A549 (cell line): ENCODE measurements at regions of chr6 and their contacts with region 1.

Region 1: DNA sequence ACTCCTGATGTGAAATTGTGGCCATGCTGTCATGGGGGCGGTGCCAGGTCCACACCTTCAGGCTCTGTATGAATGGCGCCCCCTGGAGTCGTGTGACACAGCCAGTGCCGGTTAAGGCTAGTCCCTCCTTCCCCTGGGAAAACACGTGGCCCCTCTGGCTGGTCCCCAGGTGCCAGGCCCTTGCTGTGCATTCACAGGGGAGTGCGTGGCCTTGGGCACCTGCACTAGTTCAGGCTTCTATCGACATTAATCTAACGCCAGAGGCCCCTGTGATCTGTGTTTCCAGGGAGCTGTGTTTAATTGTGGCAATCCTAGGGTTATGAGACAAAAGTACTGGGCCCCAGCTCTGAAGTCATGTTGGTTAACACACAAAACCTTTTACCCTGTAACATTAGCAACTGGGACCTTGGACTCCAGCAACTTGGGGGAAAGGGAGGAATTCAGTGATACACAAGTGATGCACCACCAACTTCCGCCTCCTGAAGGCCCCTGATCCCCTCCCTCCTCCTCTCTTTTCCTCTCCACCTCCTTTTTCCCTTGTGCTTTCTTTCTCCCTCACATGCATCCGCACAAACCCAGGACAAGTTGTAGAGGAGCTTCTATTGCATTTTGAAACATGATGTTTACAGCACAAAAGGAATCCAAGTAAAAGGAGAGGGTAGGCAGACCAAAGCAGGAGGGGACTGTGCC is 74.0 kb downstream of the SSR1 start:
- DNase-seq: peak; percentile 56 to 75
- ATAC-seq: peak; percentile 73 to 88
- H3K4me3 ChIP-seq: no peak overlapping the region
- H3K27ac ChIP-seq: peak overlapping the region in 1 of 2 experiments; percentile 60; a peak in 2 of 6 replicates
- H3K4me1 ChIP-seq: peaks cover 35% of the 10 kb centered on the region
- CTCF ChIP-seq: peak; percentile 55
- EP300 ChIP-seq: no peak
- POLR2A ChIP-seq: no peak
- RAD21 ChIP-seq: peak; percentile 49 to 64

Region 2: GRCh38 chr6:6724539-6725467 is 514.2 kb before region 1 on chr6:
- CTCF ChIA-PET with region 1: interaction called, 43 read pairs
- POLR2A ChIA-PET with region 1: no interaction called
- DNase-seq: peak; percentile 44
- ATAC-seq: peak; percentile 78 to 94; a peak in 5 of 6 replicates
- H3K4me3 ChIP-seq: 0 out of 3 replicates have a peak overlapping the region, but pooled peaks have one; percentile 9
- H3K27ac ChIP-seq: peak overlapping the region; percentile 63 to 79; a peak in 5 of 6 replicates
- H3K4me1 ChIP-seq: peaks cover 8% of the 10 kb centered on the region
- CTCF ChIP-seq: peak; percentile 65
- EP300 ChIP-seq: no peak
- POLR2A ChIP-seq: no peak
- RAD21 ChIP-seq: peak; percentile 81 to 82

Region 3: DNA sequence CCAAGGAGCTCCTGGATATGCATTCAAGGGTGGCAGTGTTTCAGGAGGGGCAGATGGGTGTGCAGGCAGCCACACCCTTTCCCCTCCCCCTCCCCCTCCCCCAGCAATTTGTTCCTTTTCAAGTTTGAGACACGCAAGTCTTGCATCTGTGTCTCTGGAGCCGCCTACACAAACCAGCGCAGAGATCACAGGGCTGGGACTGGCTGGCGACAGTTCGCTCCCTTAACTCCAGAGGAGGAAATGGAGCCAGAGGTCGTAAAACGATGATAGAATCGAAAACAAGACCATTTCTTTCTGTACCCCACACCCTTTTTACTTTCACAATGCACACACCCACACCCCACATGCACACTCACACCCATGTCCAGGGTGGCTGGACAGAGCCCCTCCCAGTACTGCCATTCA is 487.4 kb before region 1 on chr6:
- CTCF ChIA-PET with region 1: interaction called, 10 read pairs
- POLR2A ChIA-PET with region 1: no interaction called
- DNase-seq: no peak
- ATAC-seq: no peak
- H3K4me3 ChIP-seq: no peak overlapping the region
- H3K27ac ChIP-seq: no peak overlapping the region
- H3K4me1 ChIP-seq: peaks cover 23% of the 10 kb centered on the region
- CTCF ChIP-seq: no peak
- EP300 ChIP-seq: no peak
- POLR2A ChIP-seq: no peak
- RAD21 ChIP-seq: no peak

Region 4: DNA sequence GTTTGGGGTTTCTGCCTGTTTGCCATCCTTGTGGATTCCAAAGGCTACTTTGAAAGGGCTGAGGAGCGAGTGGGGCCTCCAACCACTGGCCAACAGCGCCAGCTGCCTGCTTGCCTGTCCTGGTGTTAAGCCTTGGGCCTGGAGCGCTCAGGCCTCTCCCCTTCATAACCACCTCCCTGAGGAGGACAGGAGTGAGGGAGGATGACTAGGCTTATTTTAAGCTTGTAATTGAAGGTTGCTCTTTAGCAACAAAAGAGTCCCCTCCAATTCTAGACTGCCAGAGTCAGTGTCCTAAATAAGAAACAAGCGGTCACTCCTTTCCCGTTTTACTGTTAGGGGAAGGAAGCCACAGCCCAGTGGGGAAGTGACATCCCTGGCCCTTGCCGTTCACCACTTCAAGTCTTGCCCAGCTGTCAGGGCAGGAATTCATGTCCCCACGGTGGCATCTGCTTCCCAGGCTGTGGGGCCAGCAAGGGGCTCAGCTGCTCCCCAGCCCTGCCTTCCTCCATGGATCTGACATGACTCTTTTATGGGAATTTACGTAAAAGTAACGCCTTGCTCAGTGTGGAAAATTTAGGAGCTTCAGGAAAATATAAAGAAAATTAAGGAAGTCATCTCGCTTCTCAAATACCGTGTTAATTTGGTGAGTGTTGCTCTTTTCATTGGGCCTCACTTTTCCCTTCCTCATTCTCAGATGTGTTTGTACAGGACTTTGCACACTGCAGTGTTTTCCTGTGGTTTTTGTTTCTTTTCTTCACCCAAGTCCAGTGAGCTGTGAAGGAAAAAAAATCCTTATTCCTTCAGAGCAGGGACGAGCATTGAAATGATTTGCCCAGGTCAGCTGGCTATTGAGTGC is 16.2 kb after region 1 on chr6:
- CTCF ChIA-PET with region 1: interaction called, 11 read pairs
- POLR2A ChIA-PET with region 1: no interaction called
- DNase-seq: no peak
- ATAC-seq: peak in 1 of 2 experiments; percentile 25; a peak in 1 of 6 replicates
- H3K4me3 ChIP-seq: no peak overlapping the region
- H3K27ac ChIP-seq: no peak overlapping the region
- H3K4me1 ChIP-seq: no peaks in the 10 kb centered on the region
- CTCF ChIP-seq: no peak
- EP300 ChIP-seq: no peak
- POLR2A ChIP-seq: no peak
- RAD21 ChIP-seq: no peak

Region 5: DNA sequence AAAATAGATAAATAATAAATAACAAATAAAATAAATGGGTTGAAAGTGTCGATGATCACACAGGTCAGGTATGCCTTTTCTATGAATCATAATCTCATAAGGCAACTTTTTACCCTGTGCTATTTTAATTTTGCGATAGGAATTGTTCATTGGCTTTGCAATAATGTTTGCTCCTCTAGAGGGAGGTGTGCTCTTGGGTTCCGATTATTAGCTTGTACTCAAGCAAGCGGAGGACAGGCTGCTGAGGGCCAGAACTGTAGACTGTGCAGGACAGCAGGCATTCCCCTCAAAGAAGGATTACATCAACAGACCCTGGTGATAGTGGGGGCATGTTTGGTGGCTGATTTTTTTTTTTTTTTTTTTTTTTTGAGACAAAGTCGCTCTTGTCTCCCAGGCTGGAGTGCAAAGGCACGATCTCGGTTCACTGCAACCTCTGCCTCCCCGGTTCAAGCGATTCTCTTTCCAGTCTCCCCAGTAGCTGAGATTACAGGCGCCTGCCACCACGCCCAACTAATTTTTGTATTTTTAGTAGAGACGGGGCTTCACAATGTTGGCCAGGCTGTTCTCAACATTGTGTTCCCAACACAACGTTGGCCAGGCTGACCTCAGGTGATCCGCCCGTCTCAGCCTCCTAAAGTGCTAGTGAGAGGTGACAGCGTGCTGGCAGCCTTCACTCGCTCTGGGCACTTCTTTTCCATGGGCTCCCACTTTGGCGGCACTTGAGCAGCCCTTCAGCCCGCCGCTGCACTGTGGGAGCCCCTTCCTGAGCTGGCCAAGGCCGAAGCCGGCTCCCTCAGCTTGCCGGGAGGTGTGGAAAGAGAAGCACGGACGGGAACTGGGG is 186.1 kb after region 1 on chr6:
- CTCF ChIA-PET with region 1: no interaction called
- POLR2A ChIA-PET with region 1: no interaction called
- DNase-seq: peak; percentile 29 to 56
- ATAC-seq: peak; percentile 86 to 89
- H3K4me3 ChIP-seq: no peak overlapping the region
- H3K27ac ChIP-seq: no peak overlapping the region
- H3K4me1 ChIP-seq: 0 out of 3 replicates have a peak, but pooled peaks cover 4% of the 10 kb centered on the region
- CTCF ChIP-seq: peak; percentile 42; the same call in 2 of the 3 replicates
- EP300 ChIP-seq: no peak
- POLR2A ChIP-seq: no peak
- RAD21 ChIP-seq: peak; percentile 61 to 62